ENCODE measurements at regions of chr12 and their contacts with region 1.

Region 1: DNA sequence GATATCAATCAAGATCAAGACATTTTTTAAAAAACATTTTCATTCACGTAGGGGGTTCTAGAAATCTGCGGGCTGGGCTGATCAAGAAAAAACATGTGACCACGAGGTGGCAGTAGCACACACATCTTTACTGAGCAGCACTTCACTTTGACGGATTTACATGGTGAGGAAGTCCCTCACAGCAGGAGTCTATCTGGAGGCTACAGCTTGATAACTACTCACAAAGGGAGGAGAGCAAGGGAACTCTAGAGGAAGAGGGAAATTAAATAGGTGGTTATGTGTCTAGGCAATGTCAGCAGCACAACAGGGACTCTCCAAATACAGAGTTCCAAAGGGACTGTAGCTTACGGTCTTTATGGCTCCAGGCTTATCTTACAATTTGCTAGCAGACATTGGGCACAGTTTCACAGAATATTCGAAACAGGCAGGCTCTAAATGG is 248.1 kb downstream of the DPY19L2 start:
- DNase-seq: peak in 3 of 5 donors; percentile 11 to 35 (median 34)
- ATAC-seq: peak in 3 of 4 donors; percentile 45 to 76 (median 63)
- H3K4me3 ChIP-seq: no peak overlapping the region
- H3K27ac ChIP-seq: no peak overlapping the region
- H3K4me1 ChIP-seq: no peaks in the 10 kb centered on the region
- H3K27me3 ChIP-seq: no peaks in the 10 kb centered on the region
- CTCF ChIP-seq: peak; percentile 34 to 58 (median 50)
- POLR2A ChIP-seq: no peak

Region 2: GRCh38 chr12:63021116-63021515 is 399.1 kb before region 1 on chr12:
- intact Hi-C with region 1: no loop called
- DNase-seq: no peak
- ATAC-seq: no peak
- H3K4me3 ChIP-seq: no peak overlapping the region
- H3K27ac ChIP-seq: no peak overlapping the region
- H3K4me1 ChIP-seq: no peaks in the 10 kb centered on the region
- H3K27me3 ChIP-seq: no peaks in the 10 kb centered on the region
- CTCF ChIP-seq: no peak
- POLR2A ChIP-seq: no peak

Region 3: DNA sequence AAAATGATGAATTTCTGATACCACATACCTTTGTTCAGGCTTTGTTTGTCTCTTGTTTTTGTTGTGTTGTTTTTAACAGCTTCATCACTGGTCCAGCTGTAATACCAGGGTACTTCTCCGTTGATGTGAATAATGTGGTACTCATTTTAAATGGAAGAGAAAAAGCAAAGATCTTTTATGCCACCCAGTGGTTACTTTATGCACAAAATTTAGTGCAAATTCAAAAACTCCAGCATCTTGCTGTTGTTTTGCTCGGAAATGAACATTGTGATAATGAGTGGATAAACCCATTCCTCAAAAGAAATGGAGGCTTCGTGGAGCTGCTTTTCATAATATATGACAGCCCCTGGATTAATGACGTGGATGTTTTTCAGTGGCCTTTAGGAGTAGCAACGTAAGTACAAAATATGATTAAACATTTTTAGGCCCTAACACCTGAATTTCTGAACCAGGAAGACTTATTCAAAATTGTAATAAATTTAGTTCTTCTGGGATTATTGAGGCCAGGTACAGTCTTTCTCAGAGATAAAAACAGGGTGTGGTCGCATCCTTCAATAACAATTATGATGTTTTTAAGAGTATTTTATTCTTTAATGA is 381.9 kb after region 1 on chr12:
- intact Hi-C with region 1: loop called in 4 of 10 experiments (anchors 5 to 10 kb)
- DNase-seq: no peak
- ATAC-seq: no peak
- H3K4me3 ChIP-seq: no peak overlapping the region
- H3K27ac ChIP-seq: no peak overlapping the region
- H3K4me1 ChIP-seq: no peaks in the 10 kb centered on the region
- H3K27me3 ChIP-seq: no peaks in the 10 kb centered on the region
- CTCF ChIP-seq: peak; percentile 34 to 71 (median 60)
- POLR2A ChIP-seq: no peak